Panc1 (cell line): ENCODE measurements at regions of chr5 and their contacts with region 1.

Region 1: GRCh38 chr5:53425598-53426511 is 54.6 kb upstream of the FST start:
- DNase-seq: no peak
- ATAC-seq: peak; percentile 42; the same call in 1 of the 2 replicates
- H3K4me3 ChIP-seq: no peak overlapping the region
- H3K27ac ChIP-seq: no peak overlapping the region
- H3K4me1 ChIP-seq: no peaks in the 10 kb centered on the region
- H3K27me3 ChIP-seq: no peaks in the 10 kb centered on the region
- CTCF ChIP-seq: peak; percentile 52

Region 2: GRCh38 chr5:53095931-53096525 is 329.8 kb before region 1 on chr5:
- CTCF ChIA-PET with region 1: no interaction called
- POLR2A ChIA-PET with region 1: no interaction called
- in situ Hi-C with region 1: no loop called
- intact Hi-C with region 1: no loop called
- DNase-seq: peak; percentile 73
- ATAC-seq: peak; percentile 37; the same call in 1 of the 2 replicates
- H3K4me3 ChIP-seq: no peak overlapping the region
- H3K27ac ChIP-seq: no peak overlapping the region
- H3K4me1 ChIP-seq: peaks cover 11% of the 10 kb centered on the region
- H3K27me3 ChIP-seq: no peaks in the 10 kb centered on the region
- CTCF ChIP-seq: peak; percentile 83; the same call in 1 of the 2 replicates

Region 3: DNA sequence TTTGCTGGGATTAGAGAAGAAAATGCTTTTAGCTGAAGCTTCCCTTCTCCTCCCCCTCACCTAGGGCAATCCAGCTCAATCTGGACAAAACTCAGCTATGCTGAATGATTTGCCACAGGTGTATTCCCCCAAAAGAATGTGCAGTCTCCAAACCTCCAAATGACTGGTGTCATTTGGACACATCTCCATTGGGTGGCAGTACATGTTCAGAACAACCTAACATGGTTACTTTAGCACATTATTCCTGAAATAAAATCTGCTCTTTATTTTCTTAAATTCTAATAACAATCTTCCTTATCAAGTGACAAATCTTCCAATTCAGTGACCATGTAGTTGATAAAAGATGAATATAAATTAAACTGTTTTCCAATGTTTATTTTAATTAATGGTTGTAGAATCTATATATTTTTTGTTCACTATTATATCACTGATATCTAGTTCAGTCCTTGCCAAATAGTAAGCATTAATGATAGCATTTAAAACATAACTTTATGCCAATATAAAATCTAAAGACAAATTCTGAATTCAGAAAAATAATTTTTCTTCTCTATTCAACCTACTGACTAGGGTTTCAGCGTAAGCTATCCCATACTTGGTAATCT is 255.0 kb before region 1 on chr5:
- CTCF ChIA-PET with region 1: no interaction called
- POLR2A ChIA-PET with region 1: no interaction called
- in situ Hi-C with region 1: no loop called
- intact Hi-C with region 1: loop called (anchors 5 kb)
- DNase-seq: peak; percentile 12
- ATAC-seq: peak; percentile 78; the same call in 1 of the 2 replicates
- H3K4me3 ChIP-seq: no peak overlapping the region
- H3K27ac ChIP-seq: no peak overlapping the region
- H3K4me1 ChIP-seq: no peaks in the 10 kb centered on the region
- H3K27me3 ChIP-seq: peaks cover 2% of the 10 kb centered on the region; the same call in 1 of the 2 replicates
- CTCF ChIP-seq: peak; percentile 77

Region 4: DNA sequence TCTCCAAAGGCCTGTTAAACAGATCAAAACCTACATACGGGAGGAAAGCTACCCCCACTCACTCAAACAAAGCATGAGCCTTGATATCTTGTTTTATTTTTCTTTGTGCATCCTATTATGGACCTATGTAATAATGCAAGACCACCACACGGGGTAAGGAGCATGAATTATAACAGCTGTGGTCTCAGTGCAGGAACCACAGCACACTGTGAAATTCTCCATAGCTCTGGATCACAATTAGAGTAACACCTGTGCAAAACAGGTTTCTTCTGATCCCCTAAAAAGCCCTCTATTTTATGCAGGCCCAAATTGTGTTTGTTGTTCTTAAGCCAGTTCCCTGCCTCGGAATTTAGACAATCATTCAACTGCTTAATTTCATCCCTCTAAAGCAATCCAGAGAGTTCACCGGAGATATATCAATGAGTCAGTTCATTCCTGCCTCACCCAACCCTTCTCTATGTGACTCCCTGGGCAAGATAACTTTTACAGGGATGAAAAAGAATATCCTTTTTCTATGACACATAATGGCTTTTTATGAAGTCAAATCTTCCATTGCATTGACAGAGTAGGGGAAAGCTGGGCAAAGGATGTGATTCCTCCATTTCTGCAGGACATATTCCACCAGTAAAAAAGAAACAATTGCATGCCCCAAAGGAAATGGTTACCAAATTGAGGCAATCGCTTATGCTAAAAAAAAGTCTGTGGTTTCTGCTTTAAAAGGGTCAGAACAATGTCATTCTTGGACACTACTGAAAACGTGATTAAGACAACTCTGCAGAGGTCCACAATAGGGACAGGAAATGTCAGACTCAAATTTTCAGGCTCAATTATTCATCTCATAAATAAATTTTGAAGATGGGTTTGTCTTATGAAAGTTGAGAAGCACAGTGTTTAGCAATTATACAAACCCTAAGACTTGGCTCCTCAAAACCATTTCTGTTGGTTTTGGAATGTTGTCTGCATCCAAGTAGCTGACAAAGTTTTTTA is 12.9 kb after region 1 on chr5:
- CTCF ChIA-PET with region 1: no interaction called
- POLR2A ChIA-PET with region 1: no interaction called
- in situ Hi-C with region 1: no loop called
- intact Hi-C with region 1: no loop called
- DNase-seq: no peak
- ATAC-seq: no peak
- H3K4me3 ChIP-seq: no peak overlapping the region
- H3K27ac ChIP-seq: no peak overlapping the region
- H3K4me1 ChIP-seq: no peaks in the 10 kb centered on the region
- H3K27me3 ChIP-seq: no peaks in the 10 kb centered on the region
- CTCF ChIP-seq: no peak